AG04450 (cell line): ENCODE measurements at regions of chr16 and their contacts with region 1.

Region 1: GRCh38 chr16:66152823-66153393 is 213.6 kb upstream of the CDH5 start:
- DNase-seq: peak; percentile 87
- H3K4me3 ChIP-seq: no peak overlapping the region
- H3K27ac ChIP-seq: peak overlapping the region; percentile 90
- H3K27me3 ChIP-seq: no peaks in the 10 kb centered on the region
- CTCF ChIP-seq: peak; percentile 28

Region 2: DNA sequence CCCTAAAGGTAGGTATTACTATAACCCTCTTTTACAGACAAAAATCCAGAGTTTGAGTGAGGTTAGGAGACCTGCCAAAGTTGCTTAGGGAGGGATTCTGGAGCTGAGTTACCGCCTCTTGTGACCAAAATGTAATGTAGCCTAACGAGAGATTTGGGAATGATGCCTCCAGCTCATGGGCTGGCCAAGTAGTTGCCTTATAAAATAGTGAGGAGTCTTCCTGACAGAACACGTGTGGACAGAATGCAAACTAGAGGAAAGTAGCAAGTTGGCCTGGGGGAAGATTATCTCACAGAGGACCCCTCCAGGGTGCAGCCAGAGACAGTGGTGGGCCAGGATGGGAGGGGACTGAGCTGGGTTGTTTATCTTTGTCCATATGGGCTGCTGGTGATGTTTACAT is 487.3 kb before region 1 on chr16:
- CTCF ChIA-PET with region 1: no interaction called
- POLR2A ChIA-PET with region 1: no interaction called
- DNase-seq: no peak
- H3K4me3 ChIP-seq: no peak overlapping the region
- H3K27ac ChIP-seq: no peak overlapping the region
- H3K27me3 ChIP-seq: peaks cover 4% of the 10 kb centered on the region
- CTCF ChIP-seq: no peak

Region 3: DNA sequence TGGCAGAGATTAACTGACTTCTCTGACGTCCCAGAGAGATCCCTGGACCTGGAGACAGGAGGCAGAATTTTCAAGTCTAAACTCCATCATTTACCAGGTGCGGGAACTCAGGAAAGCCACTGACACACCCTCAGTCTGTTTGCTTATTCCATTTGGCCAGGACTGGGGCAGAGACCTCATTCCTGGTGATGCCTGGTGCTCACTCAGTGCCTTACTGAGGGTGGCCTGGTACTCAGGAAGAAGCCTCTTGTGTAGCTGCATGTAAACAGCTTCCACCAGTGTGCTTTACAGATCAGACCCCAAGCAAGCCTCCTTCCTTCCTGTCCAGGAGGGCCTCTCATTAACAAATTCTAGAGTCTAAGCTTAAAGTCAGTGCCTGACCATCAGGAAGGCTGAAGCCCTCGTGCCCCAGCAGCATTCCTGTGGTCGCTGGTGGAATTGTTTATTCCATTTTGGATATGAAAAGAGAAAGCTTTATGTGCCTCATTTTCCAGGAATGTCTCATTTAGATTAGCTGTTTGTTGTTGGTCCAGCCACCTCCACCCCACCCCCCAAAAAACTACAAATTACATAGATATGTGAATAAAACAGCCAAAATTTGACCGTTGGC is 22.5 kb before region 1 on chr16:
- CTCF ChIA-PET with region 1: no interaction called
- POLR2A ChIA-PET with region 1: interaction called, 50 read pairs
- DNase-seq: peak; percentile 87
- H3K4me3 ChIP-seq: no peak overlapping the region
- H3K27ac ChIP-seq: peak overlapping the region; percentile 94
- H3K27me3 ChIP-seq: no peaks in the 10 kb centered on the region
- CTCF ChIP-seq: no peak

Region 4: DNA sequence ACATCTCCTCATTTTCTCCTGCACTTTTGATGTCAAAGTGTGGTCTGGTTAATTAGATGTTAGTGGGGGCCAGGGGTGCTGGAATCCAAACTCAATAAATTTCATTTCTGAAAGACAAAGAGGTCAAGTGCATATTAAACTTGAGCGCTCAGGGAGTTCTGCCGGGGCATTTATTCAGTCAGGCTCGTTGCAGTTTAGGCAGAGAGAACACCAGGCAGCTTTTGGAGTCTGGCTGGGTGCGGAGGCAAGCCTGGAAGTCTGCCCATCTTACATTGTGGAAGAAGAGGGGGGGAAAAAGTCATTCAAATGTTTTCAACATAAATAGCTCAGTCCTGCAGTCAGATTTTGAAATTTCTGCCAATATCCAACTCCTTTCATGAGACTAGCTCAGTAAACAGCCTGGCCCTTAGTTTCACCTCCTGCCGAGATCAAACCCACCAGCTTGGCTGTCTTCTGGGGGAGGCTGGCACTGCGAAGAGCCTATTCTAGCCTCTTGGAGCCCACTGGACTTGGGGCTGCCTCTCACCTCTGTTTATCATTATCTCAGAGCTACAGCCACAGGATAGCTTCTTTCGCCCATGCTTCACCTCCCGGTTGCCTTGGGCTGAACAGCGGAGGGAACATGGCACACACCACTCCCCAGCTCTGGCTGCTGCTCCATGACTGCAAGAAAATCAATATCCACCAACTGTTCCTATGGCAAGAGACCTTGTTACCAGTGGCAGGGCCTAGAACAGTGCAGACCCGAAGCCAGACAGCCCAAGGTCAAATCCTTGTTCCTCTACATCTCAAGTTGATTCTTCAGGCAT is 36.2 kb after region 1 on chr16:
- CTCF ChIA-PET with region 1: no interaction called
- POLR2A ChIA-PET with region 1: interaction called, 16 read pairs
- DNase-seq: peak; percentile 63
- H3K4me3 ChIP-seq: no peak overlapping the region
- H3K27ac ChIP-seq: peak overlapping the region; percentile 87
- H3K27me3 ChIP-seq: no peaks in the 10 kb centered on the region
- CTCF ChIP-seq: no peak

Region 5: GRCh38 chr16:66266436-66267291 is 113.8 kb after region 1 on chr16:
- CTCF ChIA-PET with region 1: interaction called, 4 read pairs
- POLR2A ChIA-PET with region 1: interaction called, 10 read pairs
- DNase-seq: peak; percentile 92
- H3K4me3 ChIP-seq: no peak overlapping the region
- H3K27ac ChIP-seq: peak overlapping the region; percentile 86
- H3K27me3 ChIP-seq: no peaks in the 10 kb centered on the region
- CTCF ChIP-seq: peak; percentile 33; the same call in 1 of the 2 replicates